MCF 10A (cell line): ENCODE measurements at regions of chr6 and their contacts with region 1.

Region 1: DNA sequence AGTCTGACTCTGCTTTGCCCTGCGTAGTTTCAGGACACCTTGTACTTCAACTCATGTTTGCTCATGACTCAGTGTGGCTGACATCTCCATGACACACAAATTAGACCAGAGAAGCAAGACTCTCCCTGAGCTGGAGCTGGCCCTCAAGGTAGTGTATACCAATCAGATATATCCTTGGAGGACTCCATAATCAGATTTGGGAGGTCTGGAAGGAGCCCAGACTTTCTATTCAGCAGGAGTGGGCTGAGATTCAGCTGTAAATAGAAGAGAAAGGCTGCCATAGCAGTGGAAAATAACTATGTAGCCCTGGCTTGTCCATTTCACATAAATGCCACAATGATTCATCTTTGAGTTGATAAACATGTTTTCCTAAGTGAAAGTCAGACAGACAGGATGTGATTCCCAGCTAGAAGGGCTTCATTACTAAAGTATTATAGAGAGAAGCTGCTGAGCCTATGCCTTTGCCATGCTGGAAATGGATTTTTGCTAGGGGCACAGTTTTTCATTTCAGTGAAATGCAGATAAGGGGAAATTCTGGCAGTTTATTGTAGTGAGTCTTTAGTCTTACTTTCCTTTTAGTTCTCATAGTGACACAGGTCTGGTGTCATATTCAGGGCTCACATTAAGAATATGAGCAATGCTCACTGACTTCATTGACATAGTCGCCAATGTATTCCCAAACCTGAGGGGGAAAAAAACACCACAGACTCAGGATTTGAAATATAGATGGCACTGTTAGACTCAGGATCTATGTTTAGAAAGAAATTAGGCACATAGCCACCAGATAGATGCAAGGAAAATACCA is 95.3 kb downstream of the CLVS2 start:
- DNase-seq: peak; percentile 84
- H3K4me3 Mint-ChIP-seq: peak overlapping the region; percentile 60
- H3K27ac Mint-ChIP-seq: peak overlapping the region; percentile 100
- H3K4me1 Mint-ChIP-seq: peaks cover 33% of the 10 kb centered on the region
- H3K27me3 Mint-ChIP-seq: no peaks in the 10 kb centered on the region
- CTCF ChIP-seq: no peak

Region 2: GRCh38 chr6:123105561-123105960 is 14.3 kb after region 1 on chr6:
- CTCF ChIA-PET with region 1: interaction called, 5 read pairs
- POLR2A ChIA-PET with region 1: interaction called, 10 read pairs
- intact Hi-C with region 1: no loop called
- DNase-seq: no peak
- H3K4me3 Mint-ChIP-seq: no peak overlapping the region
- H3K27ac Mint-ChIP-seq: peak overlapping the region; percentile 94
- H3K4me1 Mint-ChIP-seq: peaks cover 18% of the 10 kb centered on the region
- H3K27me3 Mint-ChIP-seq: no peaks in the 10 kb centered on the region
- CTCF ChIP-seq: no peak

Region 3: DNA sequence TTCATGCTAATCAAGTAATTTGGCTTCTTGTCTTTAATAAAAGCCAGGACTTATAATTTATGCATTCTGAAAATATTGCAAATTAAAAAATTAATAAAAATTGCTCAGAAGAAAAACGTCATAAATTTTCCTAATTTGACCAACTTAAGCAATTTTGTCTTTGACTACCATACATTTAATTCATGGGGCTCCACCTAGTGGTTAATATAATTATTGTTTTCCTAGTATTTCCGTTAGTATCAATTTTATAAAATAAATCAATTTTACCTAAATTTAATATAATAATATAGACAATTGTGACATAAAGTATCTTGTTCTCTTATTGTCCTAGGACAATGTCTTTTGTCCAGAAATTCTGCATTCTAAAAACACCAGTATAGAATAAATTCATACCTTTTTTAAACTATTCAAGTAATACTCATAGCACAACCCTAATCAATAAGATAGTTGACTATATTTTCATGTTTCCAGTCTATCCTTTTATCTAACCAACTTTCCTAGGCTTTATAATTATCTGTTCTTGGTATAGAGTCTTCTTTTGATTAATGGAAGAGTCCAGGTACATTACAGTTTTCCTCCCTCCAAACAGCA is 225.5 kb after region 1 on chr6:
- CTCF ChIA-PET with region 1: interaction called, 5 read pairs
- POLR2A ChIA-PET with region 1: no interaction called
- intact Hi-C with region 1: loop called (anchors 1 kb)
- DNase-seq: peak; percentile 33
- H3K4me3 Mint-ChIP-seq: no peak overlapping the region
- H3K27ac Mint-ChIP-seq: no peak overlapping the region
- H3K4me1 Mint-ChIP-seq: no peaks in the 10 kb centered on the region
- H3K27me3 Mint-ChIP-seq: no peaks in the 10 kb centered on the region
- CTCF ChIP-seq: peak; percentile 53